Activated CD8-positive, alpha-beta T cell treated with anti-CD3 and anti-CD28 coated beads for 36 hours (primary cell): ENCODE measurements at regions of chr5 and their contacts with region 1.

Region 1: DNA sequence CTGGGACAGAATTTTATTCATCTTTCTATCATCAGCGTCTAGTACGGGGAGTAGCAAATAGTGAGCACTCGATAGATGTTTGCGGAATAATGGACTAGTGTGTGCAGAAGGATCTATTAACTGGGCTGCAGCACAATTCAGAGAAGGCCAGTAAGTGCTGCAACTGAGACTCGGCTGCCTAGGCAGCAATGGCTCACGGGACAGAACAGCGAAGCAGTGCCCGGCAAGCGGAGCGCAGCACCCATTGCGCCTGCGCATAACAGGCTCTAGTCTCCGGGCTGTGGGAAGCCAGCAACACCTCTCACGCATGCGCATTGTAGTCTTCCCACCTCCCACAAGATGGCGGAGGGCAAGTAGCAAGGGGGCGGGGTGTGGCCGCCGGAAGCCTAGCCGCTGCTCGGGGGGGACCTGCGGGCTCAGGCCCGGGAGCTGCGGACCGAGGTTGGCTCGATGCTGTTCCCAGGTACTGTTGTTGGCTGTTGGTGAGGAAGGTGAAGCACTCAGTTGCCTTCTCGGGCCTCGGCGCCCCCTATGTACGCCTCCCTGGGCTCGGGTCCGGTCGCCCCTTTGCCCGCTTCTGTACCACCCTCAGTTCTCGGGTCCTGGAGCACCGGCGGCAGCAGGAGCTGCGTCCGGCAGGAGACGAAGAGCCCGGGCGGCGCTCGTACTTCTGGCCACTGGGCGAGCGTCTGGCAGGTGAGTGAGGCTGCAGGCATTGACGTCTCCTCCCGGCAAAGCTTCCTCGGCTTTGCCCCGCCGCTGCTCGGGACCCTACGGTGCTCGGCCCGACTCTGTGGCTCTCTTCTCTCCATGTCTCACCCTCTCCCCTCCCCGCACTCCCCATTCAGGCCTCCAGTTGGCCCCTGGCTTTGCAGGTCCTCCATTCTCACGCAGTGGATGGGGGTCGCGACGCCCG is 30.2 kb upstream of the APC start:
- DNase-seq: peak; percentile 97
- ATAC-seq: peak; percentile 95
- H3K4me3 Mint-ChIP-seq: peak overlapping the region; percentile 92
- H3K27ac Mint-ChIP-seq: peak overlapping the region; percentile 86
- H3K4me1 Mint-ChIP-seq: peaks cover 49% of the 10 kb centered on the region
- H3K27me3 Mint-ChIP-seq: no peaks in the 10 kb centered on the region
- CTCF ChIP-seq: no peak

Region 2: DNA sequence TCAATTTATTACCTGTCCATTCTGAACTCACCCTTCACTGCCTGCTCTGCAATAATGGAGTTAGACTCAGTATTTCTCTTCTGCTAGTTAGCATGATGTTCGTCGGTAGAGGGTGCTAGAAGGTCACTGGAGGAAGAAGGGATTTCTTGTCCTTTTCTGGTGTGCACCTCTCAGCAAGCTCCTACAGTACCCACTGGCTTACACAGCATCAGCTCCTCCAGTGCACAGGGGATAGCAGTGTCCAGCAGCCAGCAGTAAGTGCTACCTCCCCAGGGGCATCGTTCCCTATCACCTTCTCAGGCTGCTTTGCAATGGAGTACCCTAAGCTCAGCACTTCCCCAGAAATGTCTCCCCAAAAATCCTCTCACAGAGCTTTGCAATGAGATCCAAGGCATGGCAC is 15.7 kb before region 1 on chr5:
- CTCF ChIA-PET with region 1: interaction called, 19 read pairs
- POLR2A ChIA-PET with region 1: interaction called, 3 read pairs
- intact Hi-C with region 1: no loop called
- DNase-seq: peak; percentile 53
- ATAC-seq: peak; percentile 71
- H3K4me3 Mint-ChIP-seq: no peak overlapping the region
- H3K27ac Mint-ChIP-seq: no peak overlapping the region
- H3K4me1 Mint-ChIP-seq: no peaks in the 10 kb centered on the region
- H3K27me3 Mint-ChIP-seq: peaks cover 33% of the 10 kb centered on the region
- CTCF ChIP-seq: peak; percentile 38

Region 3: DNA sequence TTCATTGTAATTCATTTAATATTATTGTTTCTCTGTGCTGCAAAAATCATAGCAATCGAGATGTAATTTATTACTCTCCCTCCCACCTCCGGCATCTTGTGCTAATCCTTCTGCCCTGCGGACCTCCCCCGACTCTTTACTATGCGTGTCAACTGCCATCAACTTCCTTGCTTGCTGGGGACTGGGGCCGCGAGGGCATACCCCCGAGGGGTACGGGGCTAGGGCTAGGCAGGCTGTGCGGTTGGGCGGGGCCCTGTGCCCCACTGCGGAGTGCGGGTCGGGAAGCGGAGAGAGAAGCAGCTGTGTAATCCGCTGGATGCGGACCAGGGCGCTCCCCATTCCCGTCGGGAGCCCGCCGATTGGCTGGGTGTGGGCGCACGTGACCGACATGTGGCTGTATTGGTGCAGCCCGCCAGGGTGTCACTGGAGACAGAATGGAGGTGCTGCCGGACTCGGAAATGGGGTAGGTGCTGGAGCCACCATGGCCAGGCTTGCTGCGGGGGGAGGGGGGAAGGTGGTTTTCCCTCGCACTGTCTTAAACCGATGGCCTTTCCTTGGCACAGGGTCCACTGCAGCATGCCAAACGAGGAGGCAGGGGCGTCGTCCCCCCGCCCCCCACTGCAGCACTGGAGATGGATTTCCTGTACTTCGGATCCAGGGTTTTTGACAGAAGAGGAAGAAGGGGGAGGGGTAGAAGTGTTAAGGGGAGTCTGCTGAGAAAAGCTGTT is 30.2 kb after region 1 on chr5 and contains the start of gene APC:
- CTCF ChIA-PET with region 1: interaction called, 3 read pairs
- POLR2A ChIA-PET with region 1: interaction called, 17 read pairs
- intact Hi-C with region 1: no loop called
- DNase-seq: peak; percentile 92
- ATAC-seq: peak; percentile 98
- H3K4me3 Mint-ChIP-seq: peak within 1 kb of the TSS; percentile 97
- H3K27ac Mint-ChIP-seq: peak within 1 kb of the TSS; percentile 84
- H3K4me1 Mint-ChIP-seq: peaks cover 18% of the 10 kb centered on the region
- H3K27me3 Mint-ChIP-seq: no peaks in the 10 kb centered on the region
- CTCF ChIP-seq: peak; percentile 14
- total RNA-seq, gene APC: 18.7 to 19.0 TPM

Region 4: DNA sequence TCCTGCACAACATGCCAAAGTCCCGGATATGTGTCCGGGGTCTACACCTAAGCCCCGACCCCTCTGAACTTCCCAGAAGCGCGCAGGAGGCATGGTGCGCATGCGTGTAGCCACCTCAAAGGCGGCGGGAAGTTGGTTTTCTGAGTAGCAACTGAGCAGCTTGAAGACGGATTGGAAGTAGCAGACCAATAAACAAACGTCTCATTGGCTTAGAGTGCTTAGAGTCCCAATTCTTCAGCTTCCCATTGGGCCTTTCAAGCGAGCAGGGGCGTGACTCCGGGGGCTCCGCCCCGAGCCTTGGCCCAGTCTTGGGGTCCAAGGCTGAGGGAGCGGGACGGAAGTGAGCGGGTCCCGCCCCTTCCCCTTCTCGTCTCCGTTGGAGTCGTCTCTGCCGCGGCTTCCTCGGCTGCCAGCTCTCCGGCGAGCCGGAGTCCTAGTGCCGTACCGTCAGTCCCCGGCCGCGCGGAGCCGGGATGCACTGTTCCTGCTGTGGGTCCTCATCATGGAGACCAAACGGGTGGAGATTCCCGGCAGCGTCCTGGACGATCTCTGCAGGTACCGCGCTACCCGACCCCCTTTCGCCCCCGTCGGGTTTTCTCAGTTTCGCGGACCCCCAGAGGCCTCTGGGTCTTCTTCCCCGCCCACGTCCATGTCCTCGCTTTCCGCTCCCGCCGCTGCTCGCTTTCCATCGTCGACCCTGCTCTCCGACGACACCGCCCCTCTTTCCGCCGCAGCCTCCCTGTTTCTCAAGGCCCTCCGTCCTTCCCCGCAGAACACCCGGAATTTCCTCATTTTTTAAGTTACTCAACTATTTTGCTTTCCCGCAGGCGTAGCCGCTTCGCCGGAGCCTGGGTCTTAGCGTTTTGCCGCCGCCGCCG is 269.2 kb after region 1 on chr5 and contains the start of gene DCP2:
- CTCF ChIA-PET with region 1: interaction called, 3 read pairs
- POLR2A ChIA-PET with region 1: interaction called, 3 read pairs
- intact Hi-C with region 1: loop called (anchors 10 kb)
- DNase-seq: peak; percentile 98
- ATAC-seq: peak; percentile 95
- H3K4me3 Mint-ChIP-seq: peak within 1 kb of the TSS; percentile 93
- H3K27ac Mint-ChIP-seq: peak within 1 kb of the TSS; percentile 98
- H3K4me1 Mint-ChIP-seq: peaks cover 36% of the 10 kb centered on the region
- H3K27me3 Mint-ChIP-seq: no peaks in the 10 kb centered on the region
- CTCF ChIP-seq: no peak
- total RNA-seq, gene DCP2: 88.9 to 91.0 TPM